Endothelial cell of umbilical vein (primary cell): ENCODE measurements at regions of chr14 and their contacts with region 1.

Region 1: GRCh38 chr14:63543000-63543825 is at the start of gene PPP2R5E:
- DNase-seq: peak; percentile 99
- H3K4me3 ChIP-seq: peak within 1 kb of the TSS; percentile 74 to 91 (median 90)
- H3K27ac ChIP-seq: peak within 1 kb of the TSS; percentile 74
- H3K4me1 ChIP-seq: peaks cover 16% of the 10 kb centered on the region
- H3K27me3 ChIP-seq: no peaks in the 10 kb centered on the region
- CTCF ChIP-seq: no peak
- POLR2A ChIP-seq: peak; percentile 98
- total RNA-seq, gene PPP2R5E: 51.1 and 52.5 TPM in 2 replicates

Region 2: DNA sequence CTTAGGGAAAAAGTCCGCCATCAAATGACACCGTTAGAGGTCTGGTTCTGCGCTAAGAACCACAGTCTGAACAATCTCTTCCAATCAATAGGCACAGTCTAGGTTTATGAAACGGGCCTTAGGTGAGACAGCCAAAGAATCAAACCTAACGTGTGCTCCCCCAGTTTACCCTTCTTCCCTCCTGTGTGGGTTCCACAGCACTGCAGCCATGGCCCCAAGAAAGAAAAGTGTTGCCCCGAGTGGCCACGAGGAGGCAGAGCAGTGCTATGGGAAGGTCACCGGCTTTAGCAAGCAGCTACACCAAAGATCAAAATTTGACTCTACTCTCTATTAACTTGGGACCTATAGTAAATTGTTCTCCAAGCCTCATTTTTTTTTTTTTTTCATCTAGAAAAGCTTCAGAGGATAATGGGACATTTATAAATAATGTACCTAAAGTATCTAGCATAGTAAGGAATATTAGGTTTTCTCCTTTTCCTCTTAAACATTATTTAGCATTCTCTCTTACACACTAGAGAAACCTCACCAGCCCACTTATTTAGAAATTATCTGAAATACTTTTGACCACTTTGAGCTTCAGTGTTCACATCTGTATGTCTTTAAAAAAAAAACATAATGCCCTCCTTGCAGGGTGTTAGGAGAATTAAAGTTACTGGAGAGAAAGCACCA is 154.3 kb before region 1 on chr14:
- CTCF ChIA-PET with region 1: interaction called, 61 read pairs
- POLR2A ChIA-PET with region 1: no interaction called
- dilution Hi-C with region 1: no loop called
- intact Hi-C with region 1: loop called (anchors 1 kb)
- DNase-seq: peak; percentile 75
- H3K4me3 ChIP-seq: no peak overlapping the region
- H3K27ac ChIP-seq: no peak overlapping the region
- H3K4me1 ChIP-seq: no peaks in the 10 kb centered on the region
- H3K27me3 ChIP-seq: no peaks in the 10 kb centered on the region
- CTCF ChIP-seq: peak; percentile 73 to 81
- POLR2A ChIP-seq: no peak

Region 3: GRCh38 chr14:63573581-63573980 is 30.4 kb after region 1 on chr14:
- CTCF ChIA-PET with region 1: interaction called, 10 read pairs
- POLR2A ChIA-PET with region 1: interaction called, 5 read pairs
- dilution Hi-C with region 1: no loop called
- intact Hi-C with region 1: no loop called
- DNase-seq: peak; percentile 82
- H3K4me3 ChIP-seq: no peak overlapping the region
- H3K27ac ChIP-seq: no peak overlapping the region
- H3K4me1 ChIP-seq: peaks cover 8% of the 10 kb centered on the region
- H3K27me3 ChIP-seq: no peaks in the 10 kb centered on the region
- CTCF ChIP-seq: no peak
- POLR2A ChIP-seq: peak; percentile 24

Region 4: DNA sequence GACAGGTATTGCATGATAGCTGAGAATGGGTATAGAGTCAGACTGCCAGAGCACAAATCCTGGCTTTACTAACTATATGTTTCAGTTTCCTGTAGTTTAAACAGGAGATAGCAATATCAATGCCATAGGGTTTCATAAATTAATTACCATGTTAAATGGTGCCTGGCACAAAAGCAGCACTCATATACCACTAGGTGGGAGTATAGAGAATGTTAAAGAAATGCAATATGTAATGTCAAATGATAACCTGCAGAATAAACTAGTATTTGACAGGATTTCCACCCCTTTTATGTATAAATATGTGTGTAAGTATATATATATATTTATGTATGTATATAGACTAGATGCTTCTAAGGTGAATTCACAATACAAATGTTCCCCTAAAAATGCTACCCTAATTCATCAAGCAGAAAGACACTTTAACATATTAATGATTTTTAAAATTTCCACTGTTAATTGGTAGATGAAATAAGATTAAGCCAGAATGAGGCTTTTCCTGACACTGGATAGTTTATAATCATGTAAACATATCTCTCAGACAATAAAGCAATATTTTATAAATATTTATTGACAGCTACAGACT is 89.8 kb after region 1 on chr14:
- CTCF ChIA-PET with region 1: interaction called, 14 read pairs
- POLR2A ChIA-PET with region 1: no interaction called
- dilution Hi-C with region 1: no loop called
- intact Hi-C with region 1: loop called (anchors 2 kb)
- DNase-seq: peak; percentile 52
- H3K4me3 ChIP-seq: no peak overlapping the region
- H3K27ac ChIP-seq: no peak overlapping the region
- H3K4me1 ChIP-seq: no peaks in the 10 kb centered on the region
- H3K27me3 ChIP-seq: no peaks in the 10 kb centered on the region
- CTCF ChIP-seq: peak; percentile 41 to 45
- POLR2A ChIP-seq: no peak

Region 5: GRCh38 chr14:63770187-63770807 is 227.1 kb after region 1 on chr14:
- CTCF ChIA-PET with region 1: interaction called, 21 read pairs
- POLR2A ChIA-PET with region 1: no interaction called
- dilution Hi-C with region 1: no loop called
- intact Hi-C with region 1: loop called (anchors 5 kb)
- DNase-seq: peak; percentile 63
- H3K4me3 ChIP-seq: no peak overlapping the region
- H3K27ac ChIP-seq: no peak overlapping the region
- H3K4me1 ChIP-seq: no peaks in the 10 kb centered on the region
- H3K27me3 ChIP-seq: no peaks in the 10 kb centered on the region
- CTCF ChIP-seq: peak; percentile 53 to 58
- POLR2A ChIP-seq: no peak